Posterior vena cava (tissue), 2 donors: ENCODE measurements at regions of chr7 and their contacts with region 1.

Region 1: GRCh38 chr7:146831875-146832274 is 715.3 kb downstream of the CNTNAP2 start:
- DNase-seq: no peak

Region 2: GRCh38 chr7:146764458-146764857 is 67.4 kb before region 1 on chr7:
- intact Hi-C with region 1: no loop called
- DNase-seq: no peak

Region 3: DNA sequence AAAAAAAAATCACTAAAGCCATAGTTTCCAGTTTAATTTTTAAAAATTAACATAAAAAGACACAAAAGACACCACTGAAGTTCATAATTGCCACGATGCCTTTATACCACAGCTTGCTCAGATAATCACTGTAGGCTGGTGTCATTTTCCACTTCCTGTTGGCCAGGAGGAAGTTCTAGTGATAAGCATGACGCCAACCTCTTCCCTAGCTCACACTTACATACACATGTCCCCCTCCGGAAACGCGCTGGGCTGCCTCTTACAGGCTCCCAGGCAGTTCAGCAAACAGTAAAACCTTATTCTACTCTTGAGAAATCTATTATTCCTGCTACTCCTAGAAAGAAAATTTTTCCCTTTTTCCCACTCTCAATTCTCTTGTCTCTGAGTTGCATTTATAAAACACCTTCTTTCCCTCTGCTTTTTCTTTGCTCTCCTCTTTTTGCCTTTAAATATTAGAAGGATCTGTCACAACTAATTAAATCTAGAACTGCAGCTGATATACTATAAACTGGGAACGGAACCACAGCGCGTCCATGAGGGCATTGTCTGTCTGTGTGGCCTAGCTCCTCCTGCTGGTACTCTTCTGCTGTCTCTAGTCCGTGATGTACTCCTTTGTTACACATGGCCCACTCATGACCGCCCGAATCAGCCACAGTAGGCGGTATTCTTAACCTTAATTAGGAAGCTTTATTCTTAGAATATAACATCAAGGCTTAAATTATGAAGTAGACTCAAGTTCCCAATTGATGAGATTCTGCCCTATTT is 50.3 kb before region 1 on chr7:
- intact Hi-C with region 1: loop called in 1 of 2 experiments (anchors 2 kb)
- DNase-seq: no peak

Region 4: DNA sequence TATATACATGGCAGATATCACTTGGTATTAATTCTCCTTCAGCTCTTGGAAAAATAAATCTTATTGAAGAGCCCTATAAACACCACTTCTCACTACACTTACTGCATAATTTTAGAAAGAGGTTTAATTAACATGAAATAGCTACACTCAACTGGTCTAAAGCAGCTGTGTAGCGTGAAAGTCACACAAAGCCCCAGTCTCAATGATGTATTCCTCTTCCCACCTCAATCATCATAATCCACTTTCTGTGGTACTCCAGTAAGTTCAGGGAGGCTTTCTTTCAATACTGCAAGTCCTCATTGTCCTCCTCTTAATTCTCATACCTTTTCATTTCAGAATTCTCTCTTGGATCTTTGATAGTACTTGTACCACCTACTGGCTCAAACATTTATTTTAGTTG is 27.3 kb before region 1 on chr7:
- intact Hi-C with region 1: loop called in 1 of 2 experiments (anchors 1 kb)
- DNase-seq: no peak